Activated B cell treated with CpG ODN at 0.5 μM for 24 hours (primary cell): ENCODE measurements at regions of chr18 and their contacts with region 1.

Region 1: GRCh38 chr18:35240664-35241447 is at the start of gene ZNF397:
- DNase-seq: peak; percentile 93
- ATAC-seq: peak; percentile 97
- H3K4me3 Mint-ChIP-seq: peak within 1 kb of the TSS; percentile 97
- H3K27ac Mint-ChIP-seq: peak within 1 kb of the TSS; percentile 98
- H3K4me1 Mint-ChIP-seq: peaks cover 22% of the 10 kb centered on the region
- H3K27me3 Mint-ChIP-seq: no peaks in the 10 kb centered on the region
- CTCF ChIP-seq: no peak
- total RNA-seq, gene ZNF397: 35.2 and 48.7 TPM in 2 replicates

Region 2: DNA sequence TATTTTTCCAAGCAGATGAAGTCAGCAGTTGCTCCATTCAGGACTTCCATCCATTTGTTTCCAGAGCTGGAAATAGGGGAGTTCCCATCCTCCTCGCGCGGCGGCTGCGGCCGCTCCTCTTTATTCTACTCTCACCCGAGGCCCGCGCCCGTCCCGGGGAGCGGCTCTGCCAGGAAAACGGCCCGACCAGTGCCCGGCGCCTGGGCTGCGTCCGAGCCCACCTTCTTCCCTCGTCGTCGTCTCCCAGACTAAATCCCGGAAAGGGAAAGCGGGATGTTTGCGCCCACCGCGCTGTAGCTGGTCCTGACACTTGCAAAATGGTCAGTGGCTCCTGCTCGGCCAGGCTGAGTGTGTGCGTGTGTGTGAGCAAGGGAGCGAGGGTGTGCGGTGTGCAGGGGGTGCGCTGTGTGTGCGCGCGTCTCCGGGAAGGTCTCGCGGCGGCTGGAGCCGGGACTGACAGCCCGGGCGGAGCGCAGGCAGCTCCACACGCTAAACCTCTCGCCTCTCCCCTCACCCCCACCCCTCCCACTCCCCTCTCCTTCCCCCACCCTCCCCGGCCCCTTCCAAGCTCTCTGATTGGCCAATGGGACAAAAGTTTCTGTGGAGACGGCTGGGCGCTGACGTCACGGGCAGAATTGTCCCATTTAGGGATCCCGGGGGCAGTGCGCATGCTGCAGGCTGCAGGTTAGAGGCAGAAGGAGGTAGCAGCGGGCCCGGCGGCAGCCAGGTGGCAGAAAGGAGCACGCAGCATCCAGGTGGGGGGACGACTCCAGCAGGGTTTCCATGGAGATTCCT is 1016.2 kb before region 1 on chr18 and contains the start of gene NOL4:
- CTCF ChIA-PET with region 1: no interaction called
- POLR2A ChIA-PET with region 1: no interaction called
- intact Hi-C with region 1: no loop called
- DNase-seq: no peak
- ATAC-seq: no peak
- H3K4me3 Mint-ChIP-seq: no peak within 1 kb of the TSS
- H3K27ac Mint-ChIP-seq: no peak within 1 kb of the TSS
- H3K4me1 Mint-ChIP-seq: peaks cover 7% of the 10 kb centered on the region
- H3K27me3 Mint-ChIP-seq: peaks cover 44% of the 10 kb centered on the region
- CTCF ChIP-seq: no peak
- total RNA-seq, gene NOL4: not detected in 2 replicates

Region 3: GRCh38 chr18:35267161-35267651 is 26.4 kb after region 1 on chr18:
- CTCF ChIA-PET with region 1: interaction called, 3 read pairs
- POLR2A ChIA-PET with region 1: interaction called, 54 read pairs
- intact Hi-C with region 1: loop called (anchors 1 kb)
- DNase-seq: peak; percentile 72
- ATAC-seq: peak; percentile 89
- H3K4me3 Mint-ChIP-seq: peak overlapping the region; percentile 94
- H3K27ac Mint-ChIP-seq: peak overlapping the region; percentile 93
- H3K4me1 Mint-ChIP-seq: peaks cover 26% of the 10 kb centered on the region
- H3K27me3 Mint-ChIP-seq: no peaks in the 10 kb centered on the region
- CTCF ChIP-seq: no peak

Region 4: DNA sequence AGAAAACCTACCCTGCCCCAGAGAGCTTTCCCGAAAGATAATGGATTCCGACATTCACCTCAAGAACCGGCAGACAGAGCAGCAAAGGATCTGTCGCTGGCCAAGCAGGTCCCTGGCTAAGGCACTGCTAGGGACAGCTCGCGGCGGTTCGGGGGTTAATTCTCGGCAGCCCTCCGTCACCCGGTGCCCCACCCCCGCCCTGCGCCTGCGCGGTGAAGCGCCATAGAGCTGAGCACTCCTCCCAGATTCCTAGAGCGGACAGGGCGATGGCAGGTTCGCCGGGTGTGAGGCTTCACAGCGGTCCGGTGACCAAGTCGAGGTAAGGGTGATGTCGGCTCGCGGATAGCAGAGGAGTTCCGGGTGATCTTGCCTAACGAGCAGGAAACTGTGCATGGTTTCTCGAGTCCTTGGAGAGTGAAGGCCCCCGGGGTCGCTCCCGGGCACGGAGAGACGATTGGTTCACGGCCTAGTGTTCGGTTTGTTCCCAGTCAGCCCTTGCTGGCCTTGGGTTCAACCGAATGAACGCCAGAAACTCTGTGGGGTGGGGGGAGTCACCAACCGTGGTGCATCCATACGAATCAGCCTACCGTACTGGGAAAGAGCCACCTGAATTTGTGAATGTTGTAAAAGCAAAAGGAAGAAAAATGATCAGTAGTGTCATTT is 49.3 kb after region 1 on chr18 and contains the start of gene ZSCAN30:
- CTCF ChIA-PET with region 1: interaction called, 3 read pairs
- POLR2A ChIA-PET with region 1: interaction called, 31 read pairs
- intact Hi-C with region 1: loop called (anchors 1 kb)
- DNase-seq: peak; percentile 92
- ATAC-seq: peak; percentile 97
- H3K4me3 Mint-ChIP-seq: peak within 1 kb of the TSS; percentile 100
- H3K27ac Mint-ChIP-seq: peak within 1 kb of the TSS; percentile 99
- H3K4me1 Mint-ChIP-seq: peaks cover 51% of the 10 kb centered on the region
- H3K27me3 Mint-ChIP-seq: peaks cover 2% of the 10 kb centered on the region
- CTCF ChIP-seq: no peak
- total RNA-seq, gene ZSCAN30: 21.2 and 23.8 TPM in 2 replicates

Region 5: GRCh38 chr18:35334821-35335220 is 94.0 kb after region 1 on chr18:
- CTCF ChIA-PET with region 1: no interaction called
- POLR2A ChIA-PET with region 1: no interaction called
- intact Hi-C with region 1: no loop called
- DNase-seq: no peak
- ATAC-seq: no peak
- H3K4me3 Mint-ChIP-seq: no peak overlapping the region
- H3K27ac Mint-ChIP-seq: peak overlapping the region; percentile 8
- H3K4me1 Mint-ChIP-seq: peaks cover 12% of the 10 kb centered on the region
- H3K27me3 Mint-ChIP-seq: no peaks in the 10 kb centered on the region
- CTCF ChIP-seq: no peak

Region 6: GRCh38 chr18:35355140-35355618 is 114.3 kb after region 1 on chr18:
- CTCF ChIA-PET with region 1: interaction called, 8 read pairs
- POLR2A ChIA-PET with region 1: interaction called, 13 read pairs
- intact Hi-C with region 1: no loop called
- DNase-seq: no peak
- ATAC-seq: peak; percentile 100
- H3K4me3 Mint-ChIP-seq: no peak overlapping the region
- H3K27ac Mint-ChIP-seq: no peak overlapping the region
- H3K4me1 Mint-ChIP-seq: peaks cover 5% of the 10 kb centered on the region
- H3K27me3 Mint-ChIP-seq: no peaks in the 10 kb centered on the region
- CTCF ChIP-seq: no peak

Region 7: GRCh38 chr18:35580701-35581539 is 340.1 kb after region 1 on chr18:
- CTCF ChIA-PET with region 1: no interaction called
- POLR2A ChIA-PET with region 1: interaction called, 3 read pairs
- intact Hi-C with region 1: loop called (anchors 5 kb)
- DNase-seq: peak; percentile 73
- ATAC-seq: peak; percentile 71
- H3K4me3 Mint-ChIP-seq: peak overlapping the region; percentile 79
- H3K27ac Mint-ChIP-seq: peak overlapping the region; percentile 83
- H3K4me1 Mint-ChIP-seq: peaks cover 42% of the 10 kb centered on the region
- H3K27me3 Mint-ChIP-seq: no peaks in the 10 kb centered on the region
- CTCF ChIP-seq: no peak